HAP-1 (cell line): ENCODE measurements at regions of chr12 and their contacts with region 1.

Region 1: GRCh38 chr12:7219599-7220243 is 30.2 kb downstream of the PEX5 start:
- DNase-seq: peak; percentile 75 to 81
- H3K4me3 ChIP-seq: no peak overlapping the region
- H3K4me1 ChIP-seq: no peaks in the 10 kb centered on the region
- H3K27me3 ChIP-seq: no peaks in the 10 kb centered on the region; the same call in 1 of the 2 replicates

Region 2: DNA sequence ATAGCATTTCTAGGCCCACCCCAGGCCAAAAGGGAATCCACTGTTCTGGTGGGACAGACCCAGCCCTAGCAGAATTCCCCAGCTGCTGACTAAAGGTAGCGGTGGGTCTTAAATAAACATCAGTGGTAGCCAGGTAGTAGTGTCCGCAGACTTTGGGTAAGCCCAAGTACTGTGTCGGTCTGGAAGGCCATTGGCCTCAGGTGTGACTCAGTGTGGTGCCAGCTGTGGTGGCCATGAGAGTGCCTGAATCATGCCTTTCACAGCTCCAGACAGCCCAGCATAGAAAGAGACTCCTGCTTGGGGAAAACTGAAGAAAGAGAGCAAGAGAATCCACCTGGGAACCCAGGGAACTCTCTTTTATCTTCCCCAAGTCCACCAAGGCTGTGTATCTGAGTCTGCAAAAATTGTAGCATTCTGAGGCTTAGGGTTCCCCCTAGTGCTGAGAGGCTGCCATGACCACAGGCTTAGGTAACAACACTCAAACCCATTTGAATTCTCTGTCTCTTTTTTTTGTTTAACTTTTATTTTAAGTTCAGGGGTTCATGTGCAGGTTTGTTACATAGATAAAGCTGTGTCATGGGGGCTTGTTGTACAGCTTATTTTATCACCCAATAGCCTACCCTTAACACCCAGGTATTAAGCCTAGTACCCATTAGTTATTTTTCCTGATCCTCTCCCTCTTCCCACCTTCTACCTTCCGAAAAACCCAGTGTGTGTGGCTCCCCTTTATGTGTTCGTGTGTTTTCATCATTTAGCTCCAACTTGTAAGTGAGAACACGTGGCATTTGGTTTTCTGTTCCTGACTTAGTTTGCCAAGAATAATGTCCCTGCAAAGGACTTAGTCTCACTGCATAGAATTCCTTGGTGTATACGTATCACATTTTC is 240.9 kb after region 1 on chr12:
- in situ Hi-C with region 1: loop called (anchors 5 kb)
- DNase-seq: peak; percentile 12 to 60
- H3K4me3 ChIP-seq: no peak overlapping the region
- H3K4me1 ChIP-seq: no peaks in the 10 kb centered on the region
- H3K27me3 ChIP-seq: no peaks in the 10 kb centered on the region

Region 3: GRCh38 chr12:7638760-7639555 is 419.2 kb after region 1 on chr12:
- in situ Hi-C with region 1: loop called (anchors 10 kb)
- DNase-seq: peak; percentile 76 to 87
- H3K4me3 ChIP-seq: no peak overlapping the region
- H3K4me1 ChIP-seq: peaks cover 12% of the 10 kb centered on the region
- H3K27me3 ChIP-seq: no peaks in the 10 kb centered on the region